Right ventricle myocardium inferior (tissue), 1 donor: ENCODE measurements at regions of chr17 and their contacts with region 1.

Region 1: DNA sequence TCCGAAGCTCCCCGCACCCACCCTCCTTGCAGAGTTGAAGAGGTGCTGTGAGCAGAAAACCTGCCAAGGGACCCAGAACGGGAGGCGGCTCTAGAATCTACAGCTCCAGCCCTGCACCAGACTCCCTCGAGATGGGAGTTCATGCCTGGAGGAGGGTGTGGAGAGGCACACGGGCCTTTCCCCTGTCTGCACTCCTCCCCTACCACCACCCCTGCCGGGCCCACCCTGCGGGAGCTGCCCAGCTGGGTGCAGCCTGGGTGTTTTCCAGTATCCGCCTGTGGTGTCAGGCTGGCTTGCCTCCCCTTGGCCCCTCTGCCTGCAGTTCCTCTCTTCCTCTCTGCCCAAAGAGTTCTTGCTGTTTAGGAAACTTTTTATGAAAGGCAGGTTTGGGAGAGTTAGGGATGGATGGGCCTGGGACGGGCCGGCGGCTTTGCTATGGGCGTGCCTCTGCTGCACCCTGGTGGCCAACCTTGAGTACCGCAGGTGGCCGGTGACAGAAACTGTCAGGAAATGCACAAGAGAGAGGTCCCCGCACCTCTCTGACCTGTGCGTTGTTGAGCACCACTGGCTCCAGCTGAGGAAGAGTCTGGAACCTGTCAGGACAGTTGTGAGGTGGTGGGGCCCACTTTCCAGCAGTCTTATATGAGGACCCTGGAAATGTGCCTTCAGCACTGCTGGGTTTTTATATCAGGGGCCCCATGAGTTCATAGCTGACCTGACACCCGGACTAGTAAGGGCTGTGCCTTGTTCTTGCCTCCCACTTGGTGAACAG is 354.1 kb downstream of the SEC14L1 start:
- DNase-seq: peak; percentile 91
- ATAC-seq: peak; percentile 64

Region 2: GRCh38 chr17:77131904-77132303 is 362.9 kb before region 1 on chr17:
- intact Hi-C with region 1: no loop called
- DNase-seq: no peak
- ATAC-seq: no peak

Region 3: GRCh38 chr17:77331301-77331864 is 163.5 kb before region 1 on chr17:
- intact Hi-C with region 1: loop called (anchors 1 kb)
- DNase-seq: peak; percentile 96
- ATAC-seq: peak; percentile 85

Region 4: GRCh38 chr17:77465358-77466041 is 29.4 kb before region 1 on chr17:
- intact Hi-C with region 1: no loop called
- DNase-seq: no peak
- ATAC-seq: peak; percentile 68